Psoas muscle (tissue), 8 donors: ENCODE measurements at regions of chr11 and their contacts with region 1.

Region 1: GRCh38 chr11:94973099-94973968 is at the starts of genes CWC15 and KDM4D:
- DNase-seq: peak; percentile 94 to 97
- ATAC-seq: peak; percentile 100
- H3K4me3 ChIP-seq: peak within 1 kb of the TSS; percentile 95
- H3K27ac ChIP-seq: peak within 1 kb of the TSS; percentile 86
- H3K4me1 ChIP-seq: peaks cover 13% of the 10 kb centered on the region
- H3K27me3 ChIP-seq: no peaks in the 10 kb centered on the region
- CTCF ChIP-seq: no peak
- total RNA-seq, gene CWC15: 81.4 to 91.6 (median 83.3) TPM
- total RNA-seq, gene KDM4D: 0.30 to 0.82 (median 0.53) TPM

Region 2: DNA sequence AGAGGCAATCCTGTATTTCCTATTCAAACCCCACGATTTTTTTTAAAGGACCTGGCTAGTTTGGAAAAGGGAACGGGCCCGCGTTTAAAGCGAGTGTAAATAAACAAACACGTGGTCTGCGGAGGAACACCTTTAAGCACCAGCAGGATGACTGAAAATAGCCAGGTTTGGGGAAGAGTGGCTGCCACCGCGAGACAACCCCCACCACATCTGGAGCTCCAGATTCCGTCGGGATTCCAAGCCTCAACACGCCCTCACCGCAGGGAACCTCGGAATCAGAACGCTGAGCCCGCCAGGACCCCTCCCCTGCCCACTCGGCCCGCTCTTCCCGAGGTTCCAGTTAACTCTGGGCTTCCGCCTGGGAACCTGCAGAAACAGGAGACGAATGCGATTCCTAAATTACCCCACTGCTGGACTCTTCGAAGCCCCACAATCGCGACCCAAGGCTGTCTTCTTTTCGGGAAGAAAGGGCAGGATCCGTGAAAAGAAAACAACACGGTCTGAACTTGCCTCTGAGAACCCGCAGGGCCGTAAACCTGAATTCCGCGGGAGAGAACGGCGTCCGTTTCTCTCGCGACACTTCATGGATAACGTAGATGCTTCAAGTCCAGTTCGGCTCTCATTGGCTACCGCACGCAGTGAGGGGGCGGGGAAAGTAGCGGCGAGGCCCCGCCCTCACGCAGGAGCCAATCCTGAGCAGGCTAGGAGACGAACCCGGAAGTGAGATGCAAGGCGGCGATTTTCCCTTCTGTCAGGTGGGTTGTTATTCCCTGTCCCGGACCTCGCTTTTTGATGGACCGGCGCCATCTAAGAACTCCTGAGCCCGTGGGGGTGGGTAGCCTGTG is 479.8 kb before region 1 on chr11 and contains the starts of genes ANKRD49 and MRE11:
- intact Hi-C with region 1: loop called in 1 of 2 experiments (anchors 10 kb)
- DNase-seq: peak; percentile 95 to 98
- ATAC-seq: peak; percentile 100
- H3K4me3 ChIP-seq: peak within 1 kb of the TSS; percentile 88
- H3K27ac ChIP-seq: peak within 1 kb of the TSS; percentile 78
- H3K4me1 ChIP-seq: peaks cover 16% of the 10 kb centered on the region
- H3K27me3 ChIP-seq: no peaks in the 10 kb centered on the region
- CTCF ChIP-seq: no peak
- total RNA-seq, gene ANKRD49: 5.4 to 13.7 (median 5.7) TPM
- total RNA-seq, gene MRE11: 6.4 to 8.3 (median 8.1) TPM

Region 3: GRCh38 chr11:94741022-94741679 is 232.2 kb before region 1 on chr11:
- intact Hi-C with region 1: loop called in 1 of 2 experiments (anchors 10 kb)
- DNase-seq: peak; percentile 34 to 70
- ATAC-seq: peak; percentile 86 to 94 (median 91)
- H3K4me3 ChIP-seq: peak overlapping the region; percentile 70
- H3K27ac ChIP-seq: peak overlapping the region; percentile 65
- H3K4me1 ChIP-seq: peaks cover 22% of the 10 kb centered on the region
- H3K27me3 ChIP-seq: no peaks in the 10 kb centered on the region
- CTCF ChIP-seq: peak; percentile 54

Region 4: GRCh38 chr11:95067039-95067840 is 93.9 kb after region 1 on chr11:
- intact Hi-C with region 1: loop called (anchors 5 to 10 kb)
- DNase-seq: peak; percentile 90 to 94
- ATAC-seq: peak; percentile 81 to 87 (median 84)
- H3K4me3 ChIP-seq: peak overlapping the region; percentile 84
- H3K27ac ChIP-seq: peak overlapping the region; percentile 93
- H3K4me1 ChIP-seq: peaks cover 12% of the 10 kb centered on the region
- H3K27me3 ChIP-seq: no peaks in the 10 kb centered on the region
- CTCF ChIP-seq: peak; percentile 66

Region 5: DNA sequence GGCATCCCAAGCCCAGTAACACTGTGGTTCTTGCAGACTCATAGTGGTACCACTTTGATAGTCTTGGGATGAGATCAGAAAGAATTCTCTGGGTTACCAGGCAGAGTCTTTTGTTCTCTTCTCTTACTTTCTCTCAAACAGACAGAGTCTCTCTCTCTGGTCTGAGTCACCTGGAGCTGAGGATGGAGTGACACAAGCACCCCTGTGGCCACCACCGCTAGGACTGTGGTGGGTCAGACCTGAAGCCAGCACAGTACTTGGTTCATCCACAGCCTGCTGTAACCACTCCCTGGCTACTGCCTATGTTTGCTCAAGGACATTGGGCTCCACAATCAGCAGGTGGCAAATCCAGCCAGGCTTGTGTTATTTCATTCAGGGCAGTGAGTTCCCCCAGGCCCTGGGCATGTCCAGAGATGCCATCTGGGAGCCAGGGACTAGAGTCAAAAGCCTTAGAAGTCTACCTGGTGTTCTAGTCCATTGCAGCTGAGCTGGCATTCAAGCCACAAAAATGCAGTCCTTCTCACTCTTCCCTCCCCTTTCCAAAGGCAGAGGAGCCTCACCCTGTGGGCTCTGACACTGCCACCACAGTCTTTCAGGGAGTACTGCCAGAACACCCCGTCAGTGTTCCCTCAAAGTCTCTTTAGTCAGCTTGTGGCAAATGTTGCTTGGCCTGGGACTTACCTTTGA is 146.2 kb after region 1 on chr11:
- intact Hi-C with region 1: no loop called
- DNase-seq: no peak
- ATAC-seq: peak; percentile 19 to 80 (median 60)
- H3K4me3 ChIP-seq: no peak overlapping the region
- H3K27ac ChIP-seq: peak overlapping the region; percentile 23
- H3K4me1 ChIP-seq: peaks cover 29% of the 10 kb centered on the region
- H3K27me3 ChIP-seq: no peaks in the 10 kb centered on the region
- CTCF ChIP-seq: no peak

Region 6: GRCh38 chr11:95790123-95790932 is 817.0 kb after region 1 on chr11 and contains the start of gene CEP57:
- intact Hi-C with region 1: loop called in 1 of 2 experiments (anchors 5 kb)
- DNase-seq: peak; percentile 91 to 94
- ATAC-seq: peak; percentile 87 to 94 (median 90)
- H3K4me3 ChIP-seq: peak within 1 kb of the TSS; percentile 73
- H3K27ac ChIP-seq: peak within 1 kb of the TSS; percentile 91
- H3K4me1 ChIP-seq: peaks cover 20% of the 10 kb centered on the region
- H3K27me3 ChIP-seq: no peaks in the 10 kb centered on the region
- CTCF ChIP-seq: no peak
- total RNA-seq, gene CEP57: 13.6 to 27.1 (median 15.7) TPM